Activated T-helper 1 cell treated with anti-CD3 and anti-CD28 coated beads, Interleukin-12 subunit alpha, Interleukin-12 subunit beta, Interleukin-2, Interleukin-4 antibody, amounts not matched to agents 30 ng/mL and 10 ng/mL and 1 ng/mL, durations not matched to agents 14 hours and 24 hours and 36 hours (primary cell): ENCODE measurements at regions of chr12 and their contacts with region 1.

Region 1: GRCh38 chr12:18861287-18861858 is 123.5 kb downstream of the CAPZA3 start:
- DNase-seq: no peak
- H3K4me3 Mint-ChIP-seq: no peak overlapping the region
- H3K27ac Mint-ChIP-seq: no peak overlapping the region
- H3K4me1 Mint-ChIP-seq: no peaks in the 10 kb centered on the region
- H3K27me3 Mint-ChIP-seq: no peaks in the 10 kb centered on the region

Region 2: GRCh38 chr12:19186722-19187661 is 325.6 kb after region 1 on chr12:
- intact Hi-C with region 1: loop called (anchors 1 kb)
- DNase-seq: no peak
- H3K4me3 Mint-ChIP-seq: no peak overlapping the region
- H3K27ac Mint-ChIP-seq: no peak overlapping the region
- H3K4me1 Mint-ChIP-seq: no peaks in the 10 kb centered on the region
- H3K27me3 Mint-ChIP-seq: no peaks in the 10 kb centered on the region